Dorsolateral prefrontal cortex (tissue), 120 donors: ENCODE measurements at regions of chr11 and their contacts with region 1.

Region 1: DNA sequence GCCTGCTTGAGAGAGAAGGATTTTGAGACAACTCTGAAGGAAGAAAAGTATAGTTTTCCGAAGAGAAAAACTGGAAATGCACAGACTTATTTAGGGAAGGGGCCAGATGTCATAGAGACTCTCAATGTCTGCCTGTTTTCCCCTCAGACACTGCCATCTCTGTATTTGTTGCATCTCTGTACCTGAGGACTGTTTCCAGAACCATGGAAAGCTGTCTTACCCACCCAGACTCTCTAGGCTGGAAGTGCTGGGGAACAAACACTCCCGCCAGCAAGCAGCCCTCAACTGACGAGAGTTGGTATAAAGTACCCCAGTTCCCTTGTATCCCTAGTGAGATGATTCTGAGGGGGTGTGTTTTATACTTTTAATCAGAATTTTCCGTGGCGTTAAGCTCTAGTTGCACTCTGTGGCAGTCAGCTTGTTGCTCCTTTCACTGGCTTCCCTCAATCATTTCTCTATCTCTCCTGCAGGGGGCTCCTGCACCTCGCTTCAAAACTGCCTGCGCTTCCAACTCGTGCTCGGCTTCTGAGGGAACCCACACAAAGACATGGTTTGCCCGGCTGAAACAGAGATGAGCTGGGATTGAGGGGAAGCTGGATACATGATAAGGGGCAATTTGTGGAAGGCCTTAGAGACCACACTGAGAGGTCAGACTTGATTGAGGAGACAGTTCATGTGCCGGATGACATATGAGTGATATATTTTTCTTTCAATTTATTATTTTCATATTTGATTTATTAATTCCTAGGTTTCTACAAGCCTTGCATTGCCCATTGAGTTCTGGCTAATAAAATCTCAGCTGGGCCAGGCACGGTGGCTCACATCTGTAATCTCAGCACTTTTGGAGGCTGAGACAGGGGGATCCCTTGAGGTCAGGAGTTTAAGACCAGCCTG is 36.9 kb upstream of the CLPB start:
- DNase-seq: peak; percentile 46 to 82 (median 72)
- H3K4me3 ChIP-seq: peak overlapping the region in 11 of 59 donors; percentile 1 to 35 (median 9)
- H3K27ac ChIP-seq: peak overlapping the region in 1 of 59 donors; percentile 13
- H3K27me3 ChIP-seq: peaks cover 0 to 15% (median 0%) of the 10 kb centered on the region in 45 donors
- CTCF ChIP-seq: peak; percentile 72 to 94 (median 87)

Region 2: DNA sequence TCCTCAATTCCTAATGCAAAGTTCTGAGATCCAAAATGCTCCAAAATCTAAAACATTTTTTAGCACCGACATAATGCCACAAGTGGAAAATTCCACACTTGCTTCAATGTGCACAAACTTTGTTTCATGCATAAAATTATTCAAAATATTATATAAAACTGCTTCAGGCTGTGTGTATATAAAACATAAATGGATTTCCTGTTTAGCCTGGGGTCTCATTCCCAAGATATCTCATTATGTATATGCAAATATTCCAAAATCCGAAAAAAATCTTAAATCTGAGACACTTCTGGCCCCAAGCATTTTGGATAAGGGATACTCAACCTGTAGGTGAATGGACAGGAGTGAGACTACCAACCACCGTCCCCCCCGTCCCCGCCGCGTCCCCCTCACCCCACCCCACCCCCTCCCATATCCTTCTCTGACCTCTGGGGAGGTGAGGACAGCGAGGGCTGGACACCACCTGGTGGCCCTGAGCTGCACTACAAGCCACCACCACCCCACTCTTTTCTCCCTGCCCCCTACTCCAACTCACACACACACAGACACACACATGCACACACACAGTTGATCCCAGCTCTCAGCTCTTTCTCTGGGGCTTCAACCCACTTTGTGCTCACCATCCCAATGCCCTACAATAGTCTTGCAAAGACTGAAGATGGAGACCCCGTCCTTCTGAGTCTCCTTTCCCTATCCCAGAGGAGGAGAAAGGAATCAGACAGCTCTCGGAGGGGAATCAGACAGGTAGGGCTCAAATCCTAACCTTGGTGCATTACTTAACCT is 102.0 kb after region 1 on chr11:
- intact Hi-C with region 1: loop called in 1 of 2 experiments (anchors 5 kb)
- DNase-seq: peak in 1 of 10 donors; percentile 28
- H3K4me3 ChIP-seq: no peak overlapping the region
- H3K27ac ChIP-seq: peak overlapping the region in 7 of 59 donors; percentile 5 to 65 (median 26)
- H3K27me3 ChIP-seq: no peaks in the 10 kb centered on the region
- CTCF ChIP-seq: peak in 55 of 56 donors; percentile 31 to 72 (median 57)